ENCODE measurements at regions of chr15 and their contacts with region 1.

Region 1: GRCh38 chr15:63729115-63729884 is 104.4 kb downstream of the HERC1 start:
- DNase-seq: no peak
- H3K4me3 Mint-ChIP-seq: no peak overlapping the region
- H3K27ac Mint-ChIP-seq: peak overlapping the region; percentile 5
- H3K4me1 Mint-ChIP-seq: peaks cover 26% of the 10 kb centered on the region
- H3K27me3 Mint-ChIP-seq: no peaks in the 10 kb centered on the region

Region 2: DNA sequence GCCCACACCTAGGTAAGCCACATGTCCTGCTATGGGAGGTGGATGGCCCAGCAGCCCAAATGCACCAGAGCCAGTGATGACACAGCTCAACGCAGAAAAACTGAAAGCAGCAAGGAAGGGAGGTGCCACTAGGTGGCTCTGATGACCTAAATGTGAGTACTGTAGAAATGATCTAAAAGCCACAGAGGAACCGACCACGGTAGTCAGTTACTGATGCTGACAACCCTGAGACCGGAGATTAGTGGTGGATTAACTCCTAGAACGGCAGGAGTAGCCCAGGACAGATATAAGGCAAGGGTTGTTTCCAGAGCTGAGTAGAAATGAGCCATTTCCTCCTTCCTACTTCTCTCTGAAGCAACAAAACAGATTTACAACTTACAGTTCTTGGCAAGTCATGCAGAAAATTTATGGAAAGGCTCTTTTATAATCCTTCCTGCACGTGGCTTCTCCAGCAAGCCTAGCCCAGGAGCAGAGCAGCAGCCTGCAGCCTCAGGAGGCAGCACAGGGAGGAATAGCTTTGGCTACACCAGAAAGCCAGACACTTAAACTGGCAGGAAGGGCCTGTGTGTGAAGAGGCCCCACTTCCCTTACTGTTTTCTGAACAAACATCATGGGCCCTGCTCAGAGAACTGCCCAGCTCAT is 119.0 kb before region 1 on chr15:
- intact Hi-C with region 1: loop called (anchors 5 kb)
- DNase-seq: peak; percentile 93
- H3K4me3 Mint-ChIP-seq: peak overlapping the region; percentile 32
- H3K27ac Mint-ChIP-seq: peak overlapping the region; percentile 92
- H3K4me1 Mint-ChIP-seq: peaks cover 27% of the 10 kb centered on the region
- H3K27me3 Mint-ChIP-seq: no peaks in the 10 kb centered on the region